HEK293T (cell line): ENCODE measurements at regions of chr11 and their contacts with region 1.

Region 1: DNA sequence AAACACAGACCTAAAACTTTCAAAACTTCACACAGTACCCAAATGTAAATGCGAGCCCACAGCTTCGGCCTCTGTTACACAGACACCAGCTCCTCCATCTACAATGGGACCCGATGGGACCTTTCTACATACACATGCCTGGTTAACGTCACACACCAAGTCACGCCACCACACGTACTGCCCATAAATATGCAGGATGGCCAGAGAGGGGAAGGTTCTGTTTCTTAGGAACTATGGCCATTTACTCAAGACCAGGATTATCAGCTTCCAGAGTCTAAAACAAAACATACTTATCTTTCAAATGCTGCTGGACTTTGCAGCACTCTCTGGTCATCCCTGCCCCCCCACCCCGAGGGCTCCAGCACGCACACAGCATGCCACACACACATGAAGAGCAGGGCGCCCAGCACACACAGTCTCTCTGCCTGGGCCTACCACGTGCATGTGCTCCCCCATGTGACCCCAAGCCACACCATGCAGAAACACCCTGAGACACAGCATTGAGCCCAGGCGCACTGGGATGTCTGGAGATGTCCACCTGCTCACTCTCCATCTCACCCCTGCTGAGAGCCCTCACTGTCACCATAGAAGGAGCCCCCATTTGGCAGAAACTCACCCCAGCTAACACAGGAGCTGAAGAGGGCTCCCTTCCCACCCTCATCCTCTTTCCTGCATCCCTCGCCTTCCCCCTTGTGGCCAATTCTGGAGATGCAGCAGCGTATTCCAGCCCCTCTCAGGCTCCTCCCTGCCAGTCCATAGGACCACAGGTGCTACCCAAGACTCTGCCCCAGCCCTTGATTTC is 61.8 kb downstream of the SLC22A12 start:
- DNase-seq: peak; percentile 87

Region 2: DNA sequence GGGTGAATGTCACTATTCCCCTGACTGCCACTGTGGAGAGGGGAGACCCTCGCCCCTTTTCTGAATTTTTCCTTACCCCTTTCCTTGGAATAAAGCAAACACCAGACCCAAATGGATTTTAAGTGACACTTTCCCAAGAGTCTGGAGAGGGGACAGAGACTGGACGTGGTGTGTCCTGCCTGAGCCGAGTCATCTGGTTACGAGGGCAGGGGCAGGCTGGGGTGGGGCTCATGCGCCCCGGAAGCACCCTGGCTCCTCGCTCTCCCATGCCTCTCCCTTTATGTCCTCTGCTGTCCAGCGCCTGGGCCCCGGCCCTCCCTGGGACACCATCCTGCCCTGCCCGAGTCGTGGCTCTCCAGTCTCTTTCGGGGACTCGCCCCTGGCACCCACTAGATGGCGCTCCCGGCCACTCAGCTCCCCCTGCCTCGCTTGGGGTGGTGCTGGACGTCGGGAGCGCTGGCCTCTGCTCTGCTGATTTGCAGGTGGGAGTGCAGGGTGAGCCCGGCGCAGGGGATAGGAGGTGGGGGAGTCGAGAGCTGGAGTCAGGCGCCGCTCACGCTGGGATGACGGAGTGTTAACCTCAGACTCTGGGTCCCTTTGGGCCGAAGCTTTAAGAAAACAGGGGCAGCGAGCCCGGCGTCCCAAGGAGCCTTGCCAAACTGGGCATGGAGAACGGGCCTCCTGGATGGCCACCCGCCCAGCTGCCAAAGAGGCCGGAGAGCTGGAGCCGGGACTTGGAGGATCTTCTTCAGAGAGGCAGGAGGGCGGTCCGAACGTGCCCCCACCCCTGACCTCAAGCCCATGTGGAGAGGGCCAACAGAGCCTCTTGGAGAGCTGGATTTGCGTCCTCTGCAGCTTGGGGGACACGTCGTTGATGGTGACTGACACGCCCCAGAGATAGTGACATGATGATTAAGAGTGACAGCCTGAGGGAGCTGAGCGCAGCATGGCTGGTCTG is 203.9 kb before region 1 on chr11:
- CTCF ChIA-PET with region 1: interaction called, 18 read pairs
- POLR2A ChIA-PET with region 1: no interaction called
- DNase-seq: peak; percentile 86

Region 3: DNA sequence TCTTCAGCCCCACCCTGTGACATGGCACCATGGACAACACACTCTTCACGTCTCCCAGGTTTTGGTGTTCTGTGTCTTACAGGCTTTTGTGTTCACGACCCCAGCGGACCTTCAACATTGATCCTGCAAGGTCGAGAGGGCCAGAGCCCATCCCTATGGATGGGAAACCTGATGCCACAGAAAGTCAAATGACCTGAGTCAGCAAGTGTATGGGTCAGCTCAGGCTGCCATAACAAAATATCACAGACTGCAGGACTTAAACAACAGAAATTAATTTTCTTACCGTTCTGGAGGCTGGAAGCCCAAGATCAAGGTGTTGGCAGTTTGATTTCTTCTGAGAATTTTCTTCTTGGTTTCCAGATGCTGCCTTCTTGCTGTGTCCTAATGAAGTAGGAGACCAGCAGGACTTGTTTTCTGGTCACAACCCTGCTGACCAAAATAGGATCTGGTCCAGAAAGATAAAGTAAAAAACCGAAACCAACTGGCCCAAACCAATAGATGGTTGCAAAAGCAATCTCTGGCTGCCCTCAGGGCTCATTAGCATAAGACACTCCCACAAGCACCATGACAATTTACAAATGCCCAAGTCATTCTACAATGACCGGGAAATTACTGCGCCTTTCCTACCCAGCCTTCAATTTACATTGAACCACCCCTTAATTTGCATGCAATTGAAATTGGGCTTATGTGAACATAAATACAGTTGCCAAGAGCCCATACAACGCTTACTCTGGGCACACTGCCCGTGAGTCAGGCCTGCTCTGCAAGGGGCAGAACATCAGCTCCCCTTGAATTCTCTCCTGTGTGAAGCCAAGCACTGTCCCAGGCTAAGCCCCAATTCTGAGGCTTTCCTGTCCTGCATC is 180.0 kb before region 1 on chr11:
- CTCF ChIA-PET with region 1: interaction called, 10 read pairs
- POLR2A ChIA-PET with region 1: no interaction called
- DNase-seq: no peak

Region 4: DNA sequence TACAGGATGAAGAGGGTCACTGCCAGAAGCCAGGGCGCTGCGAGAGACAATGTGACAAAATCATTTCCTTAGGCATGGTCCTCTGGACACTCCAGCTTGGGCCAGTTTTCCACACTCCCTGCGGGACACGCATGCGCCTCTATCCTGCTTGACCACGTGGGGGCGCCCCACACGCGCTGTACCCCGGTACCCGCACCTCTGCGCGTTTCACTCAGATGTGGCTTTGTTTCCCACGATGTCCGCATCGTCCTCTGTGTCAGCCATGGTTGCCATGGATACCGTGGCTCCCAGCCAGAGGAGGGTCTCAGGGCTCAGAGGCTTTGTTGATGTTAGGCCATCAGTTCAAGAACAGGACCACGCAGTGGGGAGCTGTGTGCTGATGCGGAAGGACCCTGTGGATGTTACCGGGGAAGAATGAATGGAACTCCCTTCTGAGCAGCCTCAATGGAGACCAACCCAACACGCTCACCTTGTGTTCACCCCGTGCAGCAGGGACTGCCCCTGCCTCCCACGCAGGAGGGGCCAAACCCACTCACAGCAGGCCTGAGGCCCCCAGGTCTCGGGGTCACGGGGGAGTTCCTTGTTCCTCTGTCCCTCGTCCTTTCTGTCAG is 162.9 kb before region 1 on chr11:
- CTCF ChIA-PET with region 1: interaction called, 11 read pairs
- POLR2A ChIA-PET with region 1: no interaction called
- DNase-seq: peak; percentile 79